IMR-90 (cell line): ENCODE measurements at regions of chr3 and their contacts with region 1.

Region 1: GRCh38 chr3:112391648-112392047 is 58.7 kb downstream of the CD200 start:
- DNase-seq: no peak
- ATAC-seq: no peak
- H3K4me3 ChIP-seq: no peak overlapping the region
- H3K27ac ChIP-seq: peak overlapping the region; percentile 100
- H3K4me1 ChIP-seq: peaks cover 15% of the 10 kb centered on the region
- H3K27me3 ChIP-seq: no peaks in the 10 kb centered on the region
- CTCF ChIP-seq: no peak
- POLR2A ChIP-seq: no peak; the same call in none of the 2 replicates
- RAD21 ChIP-seq: no peak

Region 2: DNA sequence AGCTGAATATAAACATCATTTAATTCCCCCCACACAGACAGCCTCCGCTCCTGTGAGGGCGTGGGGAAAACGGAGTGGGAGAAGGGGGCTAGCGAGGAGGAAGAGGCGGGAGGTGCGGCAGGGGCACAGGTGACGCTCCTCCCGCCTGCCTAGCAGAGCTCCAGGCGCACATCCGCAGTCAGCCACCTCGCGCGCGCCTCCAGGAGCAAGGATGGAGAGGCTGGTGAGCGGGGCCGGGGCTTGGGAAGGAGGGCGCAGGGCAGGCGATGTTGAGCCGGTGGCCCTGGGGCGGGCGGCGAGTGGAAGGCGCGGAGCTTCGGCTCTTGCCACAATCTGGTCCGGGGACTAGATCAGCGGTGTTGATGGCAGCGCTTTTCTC is 58.7 kb before region 1 on chr3 and contains the start of gene CD200:
- CTCF ChIA-PET with region 1: no interaction called
- POLR2A ChIA-PET with region 1: no interaction called
- dilution Hi-C with region 1: no loop called
- in situ Hi-C with region 1: no loop called
- intact Hi-C with region 1: loop called (anchors 2 kb)
- DNase-seq: peak; percentile 16
- ATAC-seq: peak; percentile 87
- H3K4me3 ChIP-seq: peak within 1 kb of the TSS; percentile 40
- H3K27ac ChIP-seq: peak within 1 kb of the TSS; percentile 15; the same call in 1 of the 2 replicates
- H3K4me1 ChIP-seq: no peaks in the 10 kb centered on the region
- H3K27me3 ChIP-seq: peaks cover 10% of the 10 kb centered on the region; the same call in 1 of the 2 replicates
- CTCF ChIP-seq: no peak
- POLR2A ChIP-seq: no peak
- RAD21 ChIP-seq: no peak
- total RNA-seq, gene CD200: 0.83 and 1.1 TPM in 2 replicates

Region 3: DNA sequence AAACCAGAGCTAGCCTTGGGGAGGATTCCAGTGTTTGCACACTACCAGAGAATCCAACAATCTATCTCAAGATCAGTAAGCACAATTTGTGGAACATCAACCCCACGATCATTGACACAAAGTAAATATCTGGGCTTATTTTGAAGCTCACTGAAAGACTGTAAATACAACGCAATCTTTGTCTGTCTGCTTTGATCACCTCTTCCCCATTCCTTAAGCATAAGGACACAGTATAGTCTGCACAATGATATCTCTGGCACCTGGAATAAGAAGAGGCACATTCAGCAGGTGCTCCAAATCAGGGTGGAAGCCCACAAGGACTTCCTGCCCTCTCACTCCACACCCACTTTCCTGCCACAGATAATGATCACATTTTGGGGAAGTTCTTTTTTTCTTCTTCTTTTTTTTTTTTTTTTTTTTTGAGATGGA is 81.6 kb after region 1 on chr3:
- CTCF ChIA-PET with region 1: no interaction called
- POLR2A ChIA-PET with region 1: no interaction called
- dilution Hi-C with region 1: no loop called
- in situ Hi-C with region 1: no loop called
- intact Hi-C with region 1: no loop called
- DNase-seq: no peak
- ATAC-seq: no peak
- H3K4me3 ChIP-seq: no peak overlapping the region
- H3K27ac ChIP-seq: no peak overlapping the region
- H3K4me1 ChIP-seq: no peaks in the 10 kb centered on the region
- H3K27me3 ChIP-seq: peaks cover 6% of the 10 kb centered on the region
- CTCF ChIP-seq: no peak
- POLR2A ChIP-seq: no peak
- RAD21 ChIP-seq: no peak

Region 4: DNA sequence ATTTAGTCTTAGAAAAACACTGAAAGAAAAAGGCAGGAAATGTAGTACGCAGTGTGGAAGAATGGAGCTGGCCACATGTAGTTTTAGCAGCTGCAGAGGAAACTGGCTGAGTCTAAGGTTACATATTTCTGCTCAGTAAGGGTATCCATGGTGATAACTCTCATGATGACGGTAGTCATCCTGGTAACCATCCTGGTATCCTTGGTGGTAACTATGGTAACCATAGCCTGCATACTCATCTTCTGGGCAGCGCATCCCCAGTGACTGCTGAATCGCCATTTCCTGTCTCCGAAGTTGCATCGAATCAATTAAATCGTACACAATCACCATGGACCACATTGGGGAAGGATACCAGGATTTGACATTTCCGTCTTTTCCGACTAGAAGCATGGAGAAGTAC is 213.6 kb after region 1 on chr3:
- CTCF ChIA-PET with region 1: no interaction called
- POLR2A ChIA-PET with region 1: no interaction called
- dilution Hi-C with region 1: no loop called
- in situ Hi-C with region 1: no loop called
- intact Hi-C with region 1: no loop called
- DNase-seq: peak; percentile 99
- ATAC-seq: peak; percentile 92
- H3K4me3 ChIP-seq: no peak overlapping the region
- H3K27ac ChIP-seq: no peak overlapping the region
- H3K4me1 ChIP-seq: peaks cover 3% of the 10 kb centered on the region; the same call in 1 of the 2 replicates
- H3K27me3 ChIP-seq: no peaks in the 10 kb centered on the region
- CTCF ChIP-seq: no peak
- POLR2A ChIP-seq: no peak
- RAD21 ChIP-seq: no peak

Region 5: DNA sequence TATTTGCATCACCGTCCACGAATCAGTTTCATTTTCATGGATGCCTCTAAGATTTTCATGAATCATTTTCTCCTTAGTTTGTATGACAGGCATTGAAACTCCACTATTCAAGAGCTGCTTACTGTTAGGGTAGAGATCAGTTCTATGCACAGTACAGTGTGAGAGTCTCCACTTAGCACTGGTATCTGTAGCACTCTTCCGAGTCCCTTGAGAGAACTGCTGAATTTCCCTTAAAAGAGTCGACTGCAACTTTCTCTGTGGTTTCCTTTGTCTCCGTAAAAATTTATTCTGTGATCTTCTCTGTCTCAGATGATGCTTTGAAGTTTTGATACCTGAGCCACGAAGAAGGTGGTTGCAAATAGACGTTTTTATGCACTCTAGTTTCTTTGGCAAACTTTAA is 614.0 kb after region 1 on chr3:
- CTCF ChIA-PET with region 1: no interaction called
- POLR2A ChIA-PET with region 1: no interaction called
- dilution Hi-C with region 1: no loop called
- in situ Hi-C with region 1: no loop called
- intact Hi-C with region 1: no loop called
- DNase-seq: no peak
- ATAC-seq: no peak
- H3K4me3 ChIP-seq: no peak overlapping the region
- H3K27ac ChIP-seq: no peak overlapping the region
- H3K4me1 ChIP-seq: peaks cover 2% of the 10 kb centered on the region; the same call in 1 of the 2 replicates
- H3K27me3 ChIP-seq: no peaks in the 10 kb centered on the region
- CTCF ChIP-seq: no peak
- POLR2A ChIP-seq: no peak
- RAD21 ChIP-seq: no peak